GM10248 (cell line): ENCODE measurements at regions of chr4 and their contacts with region 1.

Region 1: GRCh38 chr4:101217353-101218031 is 129.8 kb downstream of the PPP3CA start:
- DNase-seq: no peak
- CTCF ChIP-seq: no peak

Region 2: DNA sequence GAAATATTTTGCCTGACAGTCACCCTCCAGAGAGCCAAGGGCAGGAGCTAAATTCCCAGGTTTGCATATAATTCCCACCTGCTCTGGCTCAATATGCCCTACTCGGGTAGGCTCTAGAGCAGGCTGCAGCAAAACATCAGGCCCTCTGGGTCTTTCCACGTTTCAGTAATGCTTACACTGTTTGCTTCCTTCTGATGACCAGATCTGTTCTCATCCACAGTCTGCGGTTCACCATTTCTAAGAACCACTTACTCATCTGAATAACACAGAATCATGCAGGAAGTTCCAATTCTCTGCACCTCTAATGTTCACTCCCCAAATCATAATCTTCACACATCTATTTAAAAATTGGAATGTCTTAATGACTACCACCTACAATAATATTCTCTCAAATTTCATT is 11.6 kb before region 1 on chr4:
- CTCF ChIA-PET with region 1: no interaction called
- POLR2A ChIA-PET with region 1: no interaction called
- DNase-seq: peak; percentile 8
- CTCF ChIP-seq: no peak

Region 3: GRCh38 chr4:101238706-101239105 is 21.2 kb after region 1 on chr4:
- CTCF ChIA-PET with region 1: interaction called, 10 read pairs
- POLR2A ChIA-PET with region 1: no interaction called
- DNase-seq: no peak
- CTCF ChIP-seq: no peak

Region 4: DNA sequence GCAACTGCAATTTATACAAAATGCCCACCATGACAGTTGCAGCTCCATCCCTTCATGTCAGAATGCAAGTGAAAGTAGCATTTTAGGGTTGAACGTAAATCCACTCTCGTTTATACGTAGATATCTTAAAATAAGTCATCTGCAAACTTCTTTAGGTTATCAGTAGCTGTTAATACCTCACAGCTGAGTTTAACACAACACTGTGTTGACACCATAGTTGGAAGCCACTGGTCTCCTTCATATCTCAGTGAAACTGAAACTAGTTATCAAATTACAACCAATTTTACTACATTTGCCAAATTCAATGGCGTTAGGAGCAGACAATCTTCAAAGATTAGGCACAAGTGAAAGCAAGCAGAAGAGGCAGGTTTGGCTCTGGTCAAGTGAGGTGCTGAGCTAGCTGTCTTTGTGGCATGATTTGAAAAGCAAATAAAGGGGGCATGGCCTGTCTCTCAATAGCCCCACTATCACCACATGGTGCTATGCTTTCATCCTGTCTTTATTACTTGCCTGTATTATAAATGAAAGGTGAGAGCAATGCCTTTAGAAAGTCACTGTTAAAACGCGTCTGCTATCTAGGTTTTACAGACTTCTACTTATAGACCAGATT is 117.6 kb after region 1 on chr4:
- CTCF ChIA-PET with region 1: no interaction called
- POLR2A ChIA-PET with region 1: no interaction called
- DNase-seq: no peak
- CTCF ChIP-seq: no peak